ENCODE measurements at regions of chr13 and their contacts with region 1.

Region 1: DNA sequence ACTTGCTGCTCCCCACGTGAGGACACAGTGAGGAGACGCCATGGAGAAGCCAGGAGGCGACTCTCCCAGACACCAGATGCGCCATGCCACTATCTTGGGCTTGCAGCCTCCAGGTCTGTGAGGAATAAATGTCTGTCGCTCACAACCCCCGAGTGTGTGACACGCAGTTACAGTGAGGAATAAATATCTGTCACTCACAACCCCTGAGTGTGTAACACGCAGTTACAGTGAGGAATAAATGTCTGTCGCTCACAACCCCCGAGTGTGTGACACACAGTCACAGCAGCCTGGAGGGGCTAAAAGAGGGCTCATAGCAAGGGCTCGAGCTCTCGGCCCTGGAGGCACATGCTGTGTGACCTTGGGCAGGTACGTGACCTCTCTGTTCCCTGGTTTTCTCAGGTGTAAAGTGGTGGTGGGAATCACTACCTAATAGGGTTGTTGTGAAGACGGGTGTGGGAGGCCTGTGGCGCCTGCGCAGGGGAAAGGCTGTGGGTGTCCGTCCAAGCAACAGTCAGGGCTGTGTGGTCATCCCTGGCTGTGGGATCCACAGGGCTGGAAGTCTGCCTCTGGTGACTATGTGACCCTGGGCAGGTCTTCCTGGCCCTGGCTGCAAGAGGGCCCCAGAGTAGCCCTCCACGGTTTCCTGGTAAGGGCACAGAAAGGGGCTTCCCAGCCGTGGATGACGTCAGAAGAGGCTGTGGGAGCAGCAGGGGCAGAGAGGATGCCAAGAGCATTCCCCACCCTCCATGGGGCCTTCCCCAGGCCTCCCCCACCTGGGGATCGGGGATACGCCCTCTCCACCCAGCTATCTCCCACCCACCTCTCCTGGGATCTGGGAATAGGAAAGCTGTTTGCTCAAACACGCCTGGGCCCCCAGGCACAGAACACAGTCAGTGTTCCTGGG is 77.7 kb downstream of the C1QTNF9 start:
- DNase-seq: no peak
- ATAC-seq: no peak
- H3K4me3 ChIP-seq: no peak overlapping the region
- H3K27ac ChIP-seq: no peak overlapping the region
- H3K4me1 ChIP-seq: no peaks in the 10 kb centered on the region
- H3K27me3 ChIP-seq: peaks cover 0 to 9% of the 10 kb centered on the region in 2 experiments; a peak in 2 of 5 replicates
- CTCF ChIP-seq: no peak
- EP300 ChIP-seq: no peak
- POLR2A ChIP-seq: no peak
- RAD21 ChIP-seq: no peak

Region 2: GRCh38 chr13:22964245-22964966 is 1422.7 kb before region 1 on chr13:
- CTCF ChIA-PET with region 1: no interaction called
- POLR2A ChIA-PET with region 1: no interaction called
- in situ Hi-C with region 1: loop called (anchors 5 kb)
- intact Hi-C with region 1: no loop called
- DNase-seq: no peak
- ATAC-seq: no peak; the same call in 2 of the 3 replicates
- H3K4me3 ChIP-seq: no peak overlapping the region
- H3K27ac ChIP-seq: no peak overlapping the region
- H3K4me1 ChIP-seq: no peaks in the 10 kb centered on the region; a peak in 2 of 5 replicates
- H3K27me3 ChIP-seq: no peaks in the 10 kb centered on the region; a peak in 1 of 5 replicates
- CTCF ChIP-seq: no peak
- EP300 ChIP-seq: no peak
- POLR2A ChIP-seq: no peak
- RAD21 ChIP-seq: no peak

Measured in K562 (cell line).